ENCODE measurements at regions of chr1 and their contacts with region 1.

Region 1: DNA sequence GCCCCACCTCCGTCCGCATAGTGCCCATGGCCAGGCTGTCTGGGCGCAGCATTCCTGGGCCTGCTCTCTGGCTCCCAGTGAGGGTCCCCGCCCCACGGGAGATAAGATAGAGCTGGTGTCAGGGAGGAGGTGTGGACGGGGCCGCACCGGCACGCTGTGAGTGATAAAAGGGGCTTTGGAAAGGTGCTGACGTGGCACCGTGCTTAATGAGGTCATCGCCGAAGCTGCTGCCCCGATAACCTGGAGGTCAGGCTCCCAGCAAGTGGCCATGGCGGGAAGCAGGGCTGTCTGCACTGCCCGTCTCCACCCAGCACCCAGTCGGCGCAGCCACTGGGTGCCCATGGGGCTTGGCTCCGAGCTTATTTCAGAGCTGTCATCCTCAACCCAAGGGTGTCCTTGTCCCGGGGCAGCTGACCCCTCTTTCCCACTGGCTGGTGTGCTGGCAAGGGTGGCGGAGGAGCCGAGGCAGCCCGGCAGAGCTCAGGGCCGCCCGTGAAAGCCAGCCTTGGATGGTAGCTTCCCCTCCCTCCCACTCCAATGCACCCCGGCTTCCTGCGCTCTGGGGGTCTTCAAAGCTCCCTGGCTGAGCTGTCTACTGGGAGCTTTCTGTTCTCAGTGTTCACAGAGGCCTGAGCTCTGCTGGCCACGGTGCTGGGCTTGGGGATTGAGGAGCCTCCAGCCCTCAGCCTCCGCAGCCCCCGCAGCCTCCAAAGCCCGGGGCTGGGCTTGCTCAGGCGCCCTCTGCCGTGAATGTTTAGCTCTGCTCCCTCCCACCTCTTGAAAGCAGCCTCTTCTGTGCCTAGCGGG is 105.1 kb upstream of the ARHGEF16 start:
- DNase-seq: no peak
- H3K4me3 ChIP-seq: no peak overlapping the region
- H3K27ac ChIP-seq: no peak overlapping the region
- H3K4me1 ChIP-seq: peaks cover 0 to 16% (median 12%) of the 10 kb centered on the region in 4 experiments; a peak in 6 of 7 replicates
- H3K27me3 ChIP-seq: no peaks in the 10 kb centered on the region
- CTCF ChIP-seq: peak in 2 of 3 experiments; percentile 20 to 36; a peak in 2 of 4 replicates
- EP300 ChIP-seq: no peak
- POLR2A ChIP-seq: no peak
- RAD21 ChIP-seq: peak; percentile 15 to 34; a peak in 2 of 4 replicates

Region 2: DNA sequence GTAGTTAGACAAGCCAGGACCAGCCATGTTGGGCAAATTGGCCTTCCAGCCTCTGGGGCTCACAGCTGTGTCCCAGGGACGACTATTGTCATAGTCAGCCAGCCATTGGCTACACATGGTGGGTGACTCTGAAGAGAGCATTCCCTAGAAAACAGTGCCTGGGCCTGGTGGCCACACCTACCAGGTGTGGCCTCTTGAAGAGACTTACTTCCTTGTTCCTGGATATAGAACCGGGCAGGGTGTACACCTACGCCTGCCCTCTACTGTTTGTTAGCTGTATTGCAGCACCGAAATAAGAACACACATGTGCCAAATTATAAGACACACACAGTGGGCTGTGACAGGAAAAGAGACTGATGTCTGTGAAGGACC is 29.5 kb before region 1 on chr1:
- CTCF ChIA-PET with region 1: interaction called, 11 read pairs
- POLR2A ChIA-PET with region 1: no interaction called
- DNase-seq: peak; percentile 34 to 69
- H3K4me3 ChIP-seq: no peak overlapping the region
- H3K27ac ChIP-seq: no peak overlapping the region
- H3K4me1 ChIP-seq: peaks cover 0 to 6% (median 2%) of the 10 kb centered on the region in 4 experiments; a peak in 3 of 7 replicates
- H3K27me3 ChIP-seq: peaks cover 0 to 22% (median 9%) of the 10 kb centered on the region in 4 experiments; a peak in 4 of 7 replicates
- CTCF ChIP-seq: peak; percentile 12 to 77 (median 71)
- EP300 ChIP-seq: no peak
- POLR2A ChIP-seq: no peak
- RAD21 ChIP-seq: peak; percentile 74 to 81

Region 3: DNA sequence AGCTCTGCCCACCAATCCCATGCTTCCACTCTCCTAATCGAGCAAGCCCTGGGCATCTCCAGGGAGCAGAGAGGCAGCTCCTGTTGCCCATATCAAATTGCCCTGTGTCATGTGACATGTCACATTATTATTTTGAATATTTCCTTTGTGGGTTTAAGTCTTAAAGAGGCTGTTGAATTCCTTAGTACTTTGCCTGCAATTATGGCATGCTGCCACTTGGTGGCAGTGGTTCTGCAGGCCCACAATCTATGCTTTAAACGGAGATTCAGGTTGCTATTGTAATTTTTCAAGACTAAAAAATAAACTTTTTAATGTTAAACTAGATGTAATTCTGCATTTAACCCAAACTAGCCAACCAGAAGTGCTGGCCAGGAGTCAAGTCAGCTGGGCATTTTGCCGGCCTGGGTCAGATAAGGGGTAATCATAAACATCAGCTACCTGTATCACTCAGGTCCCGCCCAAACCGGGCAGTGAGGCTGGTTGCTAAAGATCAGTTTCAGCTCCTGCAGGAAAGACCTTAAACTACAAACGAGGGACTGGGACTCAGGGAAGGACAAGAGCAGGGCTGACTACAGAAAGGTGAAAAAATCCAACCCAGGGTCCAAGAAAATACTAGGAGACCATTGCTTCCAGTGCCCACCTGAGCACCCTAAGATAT is 67.8 kb after region 1 on chr1:
- CTCF ChIA-PET with region 1: interaction called, 15 read pairs
- POLR2A ChIA-PET with region 1: no interaction called
- DNase-seq: no peak
- H3K4me3 ChIP-seq: no peak overlapping the region
- H3K27ac ChIP-seq: no peak overlapping the region
- H3K4me1 ChIP-seq: no peaks in the 10 kb centered on the region; a peak in 1 of 7 replicates
- H3K27me3 ChIP-seq: no peaks in the 10 kb centered on the region
- CTCF ChIP-seq: peak in 2 of 3 experiments; percentile 41 to 45; a peak in 3 of 4 replicates
- EP300 ChIP-seq: no peak
- POLR2A ChIP-seq: no peak
- RAD21 ChIP-seq: no peak; a peak in 1 of 4 replicates

Region 4: DNA sequence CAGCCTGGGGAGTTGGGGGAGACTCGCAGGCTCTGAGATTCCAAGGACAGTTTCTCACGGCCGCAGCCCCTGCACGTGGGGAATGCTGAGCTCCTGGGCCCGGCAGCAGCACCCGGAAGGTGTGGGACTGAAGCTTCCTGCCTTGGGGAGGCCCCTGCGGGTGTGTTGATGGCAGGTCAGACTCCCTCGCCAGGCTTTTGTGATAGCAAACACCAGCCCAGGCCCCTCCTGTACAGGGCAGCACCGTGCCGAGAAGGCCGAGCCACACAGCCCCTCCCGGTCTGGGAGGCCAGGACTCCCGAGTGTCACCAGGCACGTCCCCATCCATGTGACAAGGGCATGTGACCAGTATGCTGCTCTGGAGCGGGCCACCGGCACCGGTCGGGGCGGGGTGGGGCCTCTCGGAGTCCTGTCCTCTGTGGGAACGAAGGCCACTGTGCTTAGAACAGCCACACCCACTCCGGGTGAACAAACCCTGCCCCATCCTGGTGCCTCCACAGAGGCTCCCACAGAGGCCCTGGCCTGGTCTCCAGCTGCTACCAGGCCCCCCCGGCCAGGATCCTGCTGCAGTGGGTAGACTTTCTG is 74.0 kb after region 1 on chr1:
- CTCF ChIA-PET with region 1: interaction called, 15 read pairs
- POLR2A ChIA-PET with region 1: no interaction called
- DNase-seq: no peak
- H3K4me3 ChIP-seq: no peak overlapping the region
- H3K27ac ChIP-seq: no peak overlapping the region
- H3K4me1 ChIP-seq: peaks cover 0 to 2% (median 0%) of the 10 kb centered on the region in 4 experiments; a peak in 1 of 7 replicates
- H3K27me3 ChIP-seq: no peaks in the 10 kb centered on the region
- CTCF ChIP-seq: no peak
- EP300 ChIP-seq: no peak
- POLR2A ChIP-seq: no peak
- RAD21 ChIP-seq: no peak